Aorta (tissue), 5 donors: ENCODE measurements at regions of chr12 and their contacts with region 1.

Region 1: DNA sequence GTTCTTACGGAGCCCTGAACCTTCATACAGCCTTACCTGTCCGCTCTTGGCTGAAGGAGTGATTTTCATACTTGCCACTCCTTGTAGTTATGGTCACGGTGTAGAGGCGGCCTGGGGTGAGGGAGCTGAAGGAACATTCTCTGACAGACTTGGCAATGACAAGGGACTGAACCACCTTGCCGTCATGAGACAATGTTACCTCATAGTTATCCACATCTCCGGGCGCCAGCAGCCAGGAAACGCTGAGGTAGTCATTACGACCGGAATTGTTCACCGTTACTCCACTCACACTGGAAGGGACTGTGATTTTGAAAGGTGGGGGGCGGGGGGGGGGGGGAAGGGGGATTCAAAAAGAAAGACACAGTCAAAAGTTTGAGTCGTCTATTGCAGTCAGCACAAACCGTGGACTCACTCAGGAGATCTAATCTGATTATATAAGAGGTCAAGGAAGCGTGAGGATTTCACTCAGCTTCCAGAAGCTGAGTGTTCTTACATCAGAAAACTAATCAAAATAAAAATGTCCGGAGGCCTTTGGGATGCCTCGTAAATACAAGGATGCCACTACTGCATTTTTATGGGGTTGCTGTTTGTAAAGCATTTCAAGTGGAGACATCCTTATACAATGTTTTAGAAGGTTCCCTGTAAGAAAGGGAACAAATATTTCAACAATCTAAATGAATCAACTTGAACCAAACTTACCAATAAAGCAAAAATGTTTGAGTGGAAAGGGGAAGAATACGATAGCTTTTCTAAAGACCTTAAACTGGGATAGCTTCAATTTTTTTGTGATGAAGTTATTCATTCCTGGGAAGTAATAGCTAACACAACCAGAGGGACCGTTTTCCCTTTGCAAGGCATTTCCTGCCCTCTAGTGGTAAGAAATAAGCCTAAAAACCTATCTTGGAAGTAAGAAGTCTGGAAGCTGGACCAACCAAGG is 60.6 kb downstream of the PTPRB start:
- DNase-seq: no peak
- ATAC-seq: peak; percentile 80
- H3K4me3 ChIP-seq: no peak overlapping the region
- H3K27ac ChIP-seq: no peak overlapping the region
- H3K4me1 ChIP-seq: no peaks in the 10 kb centered on the region
- H3K27me3 ChIP-seq: no peaks in the 10 kb centered on the region

Region 2: DNA sequence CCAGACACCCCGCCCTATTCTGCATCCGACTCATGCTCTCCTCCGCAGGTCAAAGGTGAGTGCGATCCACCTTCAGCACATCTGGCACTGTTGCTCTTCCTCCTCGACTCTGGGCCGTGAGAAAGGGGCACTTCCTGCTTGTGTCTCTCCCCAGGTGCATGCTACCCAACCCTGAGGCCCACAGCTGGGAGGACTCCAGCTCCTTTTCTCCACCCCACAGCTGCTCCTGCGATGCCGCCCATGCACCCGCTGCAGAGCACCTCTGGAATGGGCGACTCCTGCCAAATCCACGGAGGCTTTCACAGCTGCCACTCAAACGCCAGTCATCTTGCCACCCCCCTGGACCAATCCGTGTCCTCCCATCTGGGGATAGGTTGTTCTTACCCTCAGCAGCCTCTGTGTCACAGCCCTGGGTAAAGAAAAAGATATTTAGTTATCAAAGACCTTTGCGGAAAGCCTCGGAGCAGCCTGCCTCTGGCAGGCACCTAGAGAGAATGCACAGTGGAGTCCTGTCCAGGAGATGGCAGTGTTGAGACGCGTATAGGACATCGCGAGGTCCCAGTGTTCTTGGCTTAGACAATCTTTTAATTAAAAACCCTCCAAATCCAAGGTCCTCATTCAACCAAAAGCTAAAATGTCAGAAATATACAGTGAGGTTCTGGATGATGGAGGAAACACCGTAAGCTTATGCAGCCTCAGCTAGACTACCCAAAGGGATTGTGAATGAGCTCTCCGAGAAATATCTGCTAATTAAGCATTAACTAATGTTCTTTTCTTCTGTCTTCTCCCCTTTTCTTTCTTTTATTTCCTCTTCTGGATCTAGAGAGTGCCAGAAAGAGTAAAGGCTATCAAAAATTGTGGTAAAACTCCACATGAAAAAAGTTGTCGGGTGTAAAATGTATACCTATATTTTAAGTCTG is 697.3 kb before region 1 on chr12:
- intact Hi-C with region 1: loop called (anchors 2 to 5 kb)
- DNase-seq: peak; percentile 74 to 80
- ATAC-seq: peak; percentile 94
- H3K4me3 ChIP-seq: no peak overlapping the region
- H3K27ac ChIP-seq: no peak overlapping the region
- H3K4me1 ChIP-seq: no peaks in the 10 kb centered on the region
- H3K27me3 ChIP-seq: no peaks in the 10 kb centered on the region